Sigmoid colon (tissue), 7 donors: ENCODE measurements at regions of chr2 and their contacts with region 1.

Region 1: GRCh38 chr2:18792226-18792629 is 202.9 kb upstream of the NT5C1B start:
- DNase-seq: peak; percentile 64
- H3K4me3 ChIP-seq: no peak overlapping the region
- H3K27ac ChIP-seq: peak overlapping the region; percentile 53 to 72 (median 71)
- H3K4me1 ChIP-seq: peaks cover 0 to 41% (median 36%) of the 10 kb centered on the region in 4 donors
- H3K27me3 ChIP-seq: no peaks in the 10 kb centered on the region
- CTCF ChIP-seq: no peak
- EP300 ChIP-seq: no peak
- POLR2A ChIP-seq: no peak

Region 2: DNA sequence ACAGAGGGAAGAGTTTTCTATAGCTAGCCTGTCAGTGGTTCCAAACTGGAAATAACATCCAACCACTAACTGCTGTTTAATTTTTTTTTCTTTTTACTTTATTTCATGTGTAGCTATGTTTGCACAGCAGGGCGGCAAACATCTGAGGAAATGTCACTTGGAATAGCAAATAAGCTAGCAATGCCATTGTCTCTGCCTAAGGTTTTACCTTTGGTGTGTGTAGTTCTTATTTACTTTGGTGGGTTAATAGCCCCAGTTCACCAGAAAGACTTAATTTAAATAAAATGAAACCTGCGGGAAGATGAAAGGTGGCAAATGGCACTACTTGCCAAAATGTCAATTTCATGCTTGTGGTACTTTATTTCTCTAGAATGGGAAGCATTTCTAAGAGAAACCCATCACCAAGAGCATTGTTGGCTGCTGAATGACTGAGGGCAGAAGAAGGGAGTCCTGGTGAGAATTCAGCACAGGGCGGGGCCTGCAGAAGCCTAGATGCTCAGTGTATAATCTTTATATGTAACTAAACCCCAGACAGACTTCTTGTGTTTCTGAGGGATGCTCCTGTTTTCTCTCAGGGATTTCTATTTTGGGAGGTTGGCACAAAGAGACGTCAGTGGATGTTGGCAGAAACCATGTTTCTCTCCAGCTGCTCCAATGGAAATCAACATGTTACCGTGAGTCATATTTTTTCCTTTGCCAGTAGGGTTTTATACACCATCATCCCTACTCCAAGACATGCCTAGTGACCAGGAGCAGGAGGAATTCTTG is 97.5 kb after region 1 on chr2:
- intact Hi-C with region 1: loop called (anchors 5 kb)
- DNase-seq: peak; percentile 70
- H3K4me3 ChIP-seq: no peak overlapping the region
- H3K27ac ChIP-seq: peak overlapping the region; percentile 16 to 82 (median 76)
- H3K4me1 ChIP-seq: peaks cover 2 to 21% (median 18%) of the 10 kb centered on the region in 4 donors
- H3K27me3 ChIP-seq: no peaks in the 10 kb centered on the region
- CTCF ChIP-seq: no peak
- EP300 ChIP-seq: peak; percentile 74 to 91 (median 78)
- POLR2A ChIP-seq: no peak